ENCODE measurements at regions of chr1 and their contacts with region 1.

Region 1: GRCh38 chr1:116737020-116737854 is 17.0 kb upstream of the CD2 start:
- DNase-seq: peak; percentile 36 to 39
- ATAC-seq: peak in 6 of 8 donors; percentile 63 to 73 (median 67)
- H3K4me3 ChIP-seq: no peak overlapping the region
- H3K27ac ChIP-seq: peak overlapping the region in 1 of 10 donors; percentile 74
- H3K4me1 ChIP-seq: peaks cover 0 to 33% (median 0%) of the 10 kb centered on the region in 9 donors
- H3K27me3 ChIP-seq: peaks cover 0 to 4% (median 0%) of the 10 kb centered on the region in 7 donors
- CTCF ChIP-seq: peak; percentile 41 to 82 (median 76)

Region 2: GRCh38 chr1:116817582-116818064 is 80.4 kb after region 1 on chr1:
- intact Hi-C with region 1: loop called in 2 of 10 experiments (anchors 5 kb)
- DNase-seq: peak in 1 of 2 donors; percentile 29
- ATAC-seq: no peak
- H3K4me3 ChIP-seq: no peak overlapping the region
- H3K27ac ChIP-seq: no peak overlapping the region
- H3K4me1 ChIP-seq: peaks cover 0 to 7% (median 0%) of the 10 kb centered on the region in 9 donors
- H3K27me3 ChIP-seq: no peaks in the 10 kb centered on the region
- CTCF ChIP-seq: peak in 7 of 9 donors; percentile 40 to 75 (median 50)

Region 3: GRCh38 chr1:116853670-116854402 is 116.6 kb after region 1 on chr1:
- intact Hi-C with region 1: loop called in 1 of 10 experiments (anchors 10 kb)
- DNase-seq: no peak
- ATAC-seq: peak in 1 of 8 donors; percentile 66
- H3K4me3 ChIP-seq: no peak overlapping the region
- H3K27ac ChIP-seq: no peak overlapping the region
- H3K4me1 ChIP-seq: peaks cover 0 to 28% (median 15%) of the 10 kb centered on the region in 9 donors
- H3K27me3 ChIP-seq: no peaks in the 10 kb centered on the region
- CTCF ChIP-seq: no peak

Region 4: GRCh38 chr1:117051224-117052064 is 314.2 kb after region 1 on chr1:
- intact Hi-C with region 1: loop called (anchors 1 to 5 kb)
- DNase-seq: no peak
- ATAC-seq: peak in 3 of 8 donors; percentile 35 to 50 (median 50)
- H3K4me3 ChIP-seq: peak overlapping the region in 4 of 10 donors; percentile 7 to 27 (median 17)
- H3K27ac ChIP-seq: peak overlapping the region in 3 of 10 donors; percentile 55 to 75 (median 63)
- H3K4me1 ChIP-seq: peaks cover 0 to 38% (median 0%) of the 10 kb centered on the region in 9 donors
- H3K27me3 ChIP-seq: no peaks in the 10 kb centered on the region
- CTCF ChIP-seq: no peak

Region 5: DNA sequence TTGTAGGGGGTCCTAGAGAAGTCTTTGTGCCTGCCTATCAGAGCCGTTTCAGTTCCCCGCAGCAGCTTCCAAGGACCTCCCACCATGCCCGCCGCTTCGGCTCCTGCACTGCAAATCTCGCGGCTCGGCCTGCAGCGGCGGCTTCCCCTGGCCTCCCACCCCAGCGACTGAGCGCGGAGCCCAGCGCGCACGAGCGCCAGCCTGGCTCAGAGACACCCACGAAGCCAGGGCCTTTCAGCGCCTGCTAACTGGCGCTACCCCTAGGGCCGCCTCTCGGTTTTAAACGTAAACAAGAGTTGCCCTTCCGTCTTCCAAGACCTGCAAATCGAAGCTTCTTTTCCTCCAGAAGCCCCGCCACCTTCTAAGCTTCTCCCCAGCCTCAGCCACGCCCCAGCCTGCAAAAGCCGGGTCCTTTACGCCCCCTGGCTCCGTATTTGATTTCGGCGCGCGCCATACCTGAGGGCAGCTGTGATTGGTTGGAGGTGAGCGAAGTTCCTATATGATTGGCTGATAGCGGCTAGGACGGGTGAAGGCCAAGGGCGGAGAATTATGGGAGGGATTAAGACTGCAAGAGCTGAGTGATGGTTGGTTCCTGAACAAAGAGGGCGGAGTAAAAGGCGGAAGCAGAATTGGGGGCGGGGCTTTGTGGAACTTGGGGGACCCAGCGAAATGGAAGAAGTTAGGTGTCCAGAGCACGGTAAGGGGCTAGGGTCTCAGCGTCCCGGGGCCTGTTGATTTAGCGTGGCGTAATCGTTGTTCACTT is 322.6 kb after region 1 on chr1 and contains the start of gene TTF2:
- intact Hi-C with region 1: loop called in 6 of 10 experiments (anchors 1 to 5 kb)
- DNase-seq: peak; percentile 82 to 97
- ATAC-seq: peak; percentile 99 to 100 (median 99)
- H3K4me3 ChIP-seq: peak within 1 kb of the TSS; percentile 57 to 88 (median 78)
- H3K27ac ChIP-seq: peak within 1 kb of the TSS in 8 of 10 donors; percentile 7 to 82 (median 64)
- H3K4me1 ChIP-seq: peaks cover 0 to 25% (median 9%) of the 10 kb centered on the region in 9 donors
- H3K27me3 ChIP-seq: no peaks in the 10 kb centered on the region
- CTCF ChIP-seq: peak in 7 of 9 donors; percentile 15 to 57 (median 30)
- total RNA-seq, gene TTF2: 5.0 to 19.0 (median 10.4) TPM